HCT116 (cell line): ENCODE measurements at regions of chr4 and their contacts with region 1.

Region 1: GRCh38 chr4:88672987-88673386 is 24.6 kb downstream of the NAP1L5 start:
- DNase-seq: no peak
- ATAC-seq: peak; percentile 94
- H3K4me3 ChIP-seq: no peak overlapping the region
- H3K27ac ChIP-seq: no peak overlapping the region
- H3K4me1 ChIP-seq: no peaks in the 10 kb centered on the region
- H3K27me3 ChIP-seq: no peaks in the 10 kb centered on the region
- CTCF ChIP-seq: peak; percentile 33 to 78 (median 74); a peak in 5 of 6 replicates
- POLR2A ChIP-seq: no peak
- RAD21 ChIP-seq: peak; percentile 41; the same call in 1 of the 2 replicates

Region 2: GRCh38 chr4:88533937-88534750 is 138.8 kb before region 1 on chr4:
- CTCF ChIA-PET with region 1: interaction called, 10 read pairs
- POLR2A ChIA-PET with region 1: no interaction called
- RAD21 ChIA-PET with region 1: no interaction called
- intact Hi-C with region 1: no loop called
- DNase-seq: no peak
- ATAC-seq: no peak
- H3K4me3 ChIP-seq: no peak overlapping the region
- H3K27ac ChIP-seq: no peak overlapping the region
- H3K4me1 ChIP-seq: no peaks in the 10 kb centered on the region
- H3K27me3 ChIP-seq: no peaks in the 10 kb centered on the region
- CTCF ChIP-seq: no peak
- POLR2A ChIP-seq: no peak
- RAD21 ChIP-seq: no peak

Region 3: GRCh38 chr4:89331686-89332544 is 658.9 kb after region 1 on chr4:
- CTCF ChIA-PET with region 1: no interaction called
- POLR2A ChIA-PET with region 1: no interaction called
- RAD21 ChIA-PET with region 1: no interaction called
- intact Hi-C with region 1: no loop called
- DNase-seq: no peak
- ATAC-seq: no peak
- H3K4me3 ChIP-seq: no peak overlapping the region
- H3K27ac ChIP-seq: no peak overlapping the region
- H3K4me1 ChIP-seq: no peaks in the 10 kb centered on the region
- H3K27me3 ChIP-seq: no peaks in the 10 kb centered on the region
- CTCF ChIP-seq: no peak
- POLR2A ChIP-seq: no peak
- RAD21 ChIP-seq: no peak